ENCODE measurements at regions of chrX and their contacts with region 1.

Region 1: GRCh38 chrX:154397819-154398724 is at the start of gene RPL10:
- DNase-seq: peak; percentile 93
- H3K4me3 Mint-ChIP-seq: peak within 1 kb of the TSS; percentile 98
- H3K27ac Mint-ChIP-seq: peak within 1 kb of the TSS; percentile 100
- H3K4me1 Mint-ChIP-seq: peaks cover 16% of the 10 kb centered on the region
- H3K27me3 Mint-ChIP-seq: no peaks in the 10 kb centered on the region
- total RNA-seq, gene RPL10: 2,958 to 2,962 TPM

Region 2: DNA sequence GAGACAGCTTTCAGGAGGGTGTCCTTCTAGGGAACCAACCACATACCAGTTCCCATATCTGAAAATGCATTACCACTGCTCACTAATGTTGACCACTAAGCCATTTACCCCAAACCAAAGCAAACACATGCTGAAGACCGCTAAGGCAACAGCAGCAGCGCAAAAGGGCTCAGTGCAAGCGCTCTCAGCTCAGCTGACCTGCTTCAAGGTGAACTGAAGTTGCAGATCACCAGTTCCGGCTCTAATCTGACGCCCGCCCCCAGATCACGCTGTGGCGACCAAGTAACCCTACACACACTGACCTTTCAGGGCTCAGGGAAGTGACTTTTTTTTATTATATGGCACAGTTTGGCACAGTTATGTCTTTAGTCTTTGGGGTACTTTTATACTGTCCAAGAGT is 306.4 kb before region 1 on chrX:
- CTCF ChIA-PET with region 1: no interaction called
- POLR2A ChIA-PET with region 1: no interaction called
- DNase-seq: no peak
- H3K4me3 Mint-ChIP-seq: no peak overlapping the region
- H3K27ac Mint-ChIP-seq: peak overlapping the region; percentile 6
- H3K4me1 Mint-ChIP-seq: peaks cover 63% of the 10 kb centered on the region
- H3K27me3 Mint-ChIP-seq: no peaks in the 10 kb centered on the region

Region 3: DNA sequence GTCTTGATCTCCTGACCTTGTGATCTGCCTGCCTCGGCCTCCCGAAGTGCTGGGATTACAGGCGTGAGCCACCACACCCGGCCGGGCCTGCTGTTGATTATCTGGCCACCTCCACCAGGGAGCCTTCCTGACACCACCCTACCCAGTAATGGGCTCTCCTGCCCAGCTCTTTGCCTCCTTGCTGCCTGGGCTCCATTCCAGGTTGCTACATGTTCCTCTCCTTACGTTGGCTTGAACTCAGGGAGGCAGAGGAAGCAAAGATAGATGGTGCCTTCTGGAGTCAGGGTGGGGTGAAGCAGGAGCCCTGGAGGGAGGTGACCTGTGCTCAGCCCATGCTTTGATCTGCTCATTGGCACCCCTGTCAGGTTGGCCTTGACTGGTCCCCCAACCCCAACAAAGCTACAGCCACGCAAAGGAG is 49.9 kb before region 1 on chrX:
- CTCF ChIA-PET with region 1: no interaction called
- POLR2A ChIA-PET with region 1: interaction called, 14 read pairs
- DNase-seq: no peak
- H3K4me3 Mint-ChIP-seq: peak overlapping the region; percentile 30
- H3K27ac Mint-ChIP-seq: peak overlapping the region; percentile 81
- H3K4me1 Mint-ChIP-seq: peaks cover 54% of the 10 kb centered on the region
- H3K27me3 Mint-ChIP-seq: no peaks in the 10 kb centered on the region

Region 4: DNA sequence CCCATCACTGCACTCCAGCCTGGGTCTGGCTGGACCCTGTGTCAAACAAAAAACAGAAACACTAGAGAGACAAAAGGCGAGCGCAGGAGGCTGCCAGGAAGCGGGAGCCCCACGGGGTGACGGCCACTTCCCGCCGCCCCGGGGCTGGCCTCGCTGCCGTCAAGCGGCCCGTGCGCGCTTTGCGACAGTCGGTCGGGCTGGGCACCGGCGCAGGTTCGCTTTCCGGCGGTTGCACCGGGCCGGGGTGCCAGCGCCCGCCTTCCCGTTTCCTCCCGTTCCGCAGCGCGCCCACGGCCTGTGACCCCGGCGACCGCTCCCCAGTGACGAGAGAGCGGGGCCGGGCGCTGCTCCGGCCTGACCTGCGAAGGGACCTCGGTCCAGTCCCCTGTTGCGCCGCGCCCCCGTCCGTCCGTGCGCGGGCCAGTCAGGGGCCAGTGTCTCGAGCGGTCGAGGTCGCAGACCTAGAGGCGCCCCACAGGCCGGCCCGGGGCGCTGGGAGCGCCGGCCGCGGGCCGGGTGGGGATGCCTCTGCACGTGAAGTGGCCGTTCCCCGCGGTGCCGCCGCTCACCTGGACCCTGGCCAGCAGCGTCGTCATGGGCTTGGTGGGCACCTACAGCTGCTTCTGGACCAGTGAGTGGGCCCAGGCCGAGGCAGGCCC is 13.4 kb after region 1 on chrX and contains the start of gene TAFAZZIN:
- CTCF ChIA-PET with region 1: interaction called, 6 read pairs
- POLR2A ChIA-PET with region 1: interaction called, 103 read pairs
- DNase-seq: peak; percentile 83
- H3K4me3 Mint-ChIP-seq: peak within 1 kb of the TSS; percentile 93
- H3K27ac Mint-ChIP-seq: peak within 1 kb of the TSS; percentile 92
- H3K4me1 Mint-ChIP-seq: peaks cover 18% of the 10 kb centered on the region
- H3K27me3 Mint-ChIP-seq: no peaks in the 10 kb centered on the region
- total RNA-seq, gene TAFAZZIN: 93.7 to 93.9 TPM

Region 5: DNA sequence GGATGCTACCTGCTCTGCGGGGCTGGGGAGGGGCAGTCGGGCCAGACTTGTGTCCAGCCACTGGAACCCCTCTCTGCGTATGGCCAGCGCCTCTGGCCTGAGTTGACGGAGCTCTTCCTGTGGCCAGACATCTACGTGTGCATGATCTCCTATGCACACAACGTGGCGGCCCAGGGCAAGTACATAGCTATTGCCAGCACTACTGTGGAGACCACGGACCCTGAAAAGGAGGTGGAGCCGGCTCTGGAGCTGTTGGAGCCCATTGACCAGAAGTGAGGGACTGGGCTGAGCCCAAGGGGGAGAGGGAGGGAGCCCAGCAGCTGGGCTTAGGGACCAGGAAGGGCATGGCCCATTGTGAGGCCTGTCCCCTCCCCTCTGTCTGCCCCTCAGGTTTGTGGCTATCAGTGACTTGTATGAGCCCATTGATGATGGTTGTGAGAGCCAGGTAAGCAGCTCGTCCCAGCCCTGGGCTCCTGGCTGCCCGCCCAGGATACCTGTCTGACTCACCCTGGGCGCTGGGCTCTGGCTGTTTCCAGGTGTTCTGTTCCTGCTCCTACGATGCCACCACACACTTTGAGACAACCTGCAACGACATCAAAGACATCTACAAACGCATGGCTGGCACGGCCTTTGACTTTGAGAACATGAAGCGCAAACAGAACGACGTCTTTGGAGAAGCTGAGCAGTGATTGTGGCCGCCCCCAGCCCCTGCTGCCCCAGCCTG is 44.1 kb after region 1 on chrX:
- CTCF ChIA-PET with region 1: interaction called, 3 read pairs
- POLR2A ChIA-PET with region 1: interaction called, 11 read pairs
- DNase-seq: no peak
- H3K4me3 Mint-ChIP-seq: no peak overlapping the region
- H3K27ac Mint-ChIP-seq: peak overlapping the region; percentile 72
- H3K4me1 Mint-ChIP-seq: peaks cover 42% of the 10 kb centered on the region
- H3K27me3 Mint-ChIP-seq: no peaks in the 10 kb centered on the region

Region 6: DNA sequence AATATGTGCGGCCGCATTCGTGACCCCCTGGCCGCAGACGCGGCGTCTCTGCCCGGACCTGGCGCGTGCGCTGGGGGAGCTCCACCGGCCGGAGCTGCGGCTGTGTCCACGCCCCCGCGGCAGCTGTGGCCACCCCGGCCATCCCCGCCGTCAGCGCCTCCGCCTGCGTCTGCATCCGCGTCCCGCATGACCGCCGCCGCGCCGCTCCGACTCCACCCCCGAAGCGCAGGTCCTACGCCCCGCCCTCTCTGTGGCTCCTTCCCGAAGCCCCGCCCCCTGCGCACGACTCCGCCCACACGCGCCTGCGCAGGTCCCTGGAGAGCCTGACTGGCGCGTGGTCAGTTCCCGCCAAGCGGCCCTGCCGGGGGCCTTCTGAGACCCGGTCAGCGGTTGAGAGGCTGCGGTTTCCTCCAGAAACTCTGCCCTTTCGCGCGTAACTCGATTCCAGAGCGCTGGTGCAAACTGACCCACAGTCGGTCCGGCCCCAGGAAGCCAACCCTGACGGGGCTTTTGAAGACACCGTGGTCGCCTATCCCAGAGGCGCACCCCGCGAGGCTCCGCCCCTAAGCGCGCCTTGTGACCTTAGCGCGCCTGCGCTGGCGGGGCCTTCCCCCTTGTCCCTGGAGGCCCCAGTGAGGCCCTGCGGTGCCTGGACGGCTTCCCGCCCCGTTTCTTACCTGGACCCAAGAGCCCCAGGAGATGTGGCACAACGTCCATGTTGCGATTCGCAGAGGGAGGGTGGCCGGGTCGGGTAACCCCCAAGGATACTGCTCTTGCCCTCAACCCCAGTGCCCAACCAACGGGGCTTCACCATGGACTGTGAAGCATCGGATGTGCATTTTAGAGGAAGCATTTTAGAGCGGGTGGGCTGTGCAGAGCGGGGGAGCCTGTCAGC is 80.9 kb after region 1 on chrX and contains the start of gene LAGE3:
- CTCF ChIA-PET with region 1: interaction called, 3 read pairs
- POLR2A ChIA-PET with region 1: interaction called, 12 read pairs
- DNase-seq: peak; percentile 95
- H3K4me3 Mint-ChIP-seq: peak within 1 kb of the TSS; percentile 76
- H3K27ac Mint-ChIP-seq: peak within 1 kb of the TSS; percentile 79
- H3K4me1 Mint-ChIP-seq: peaks cover 30% of the 10 kb centered on the region
- H3K27me3 Mint-ChIP-seq: no peaks in the 10 kb centered on the region
- total RNA-seq, gene LAGE3: 28.1 to 29.9 TPM

Region 7: DNA sequence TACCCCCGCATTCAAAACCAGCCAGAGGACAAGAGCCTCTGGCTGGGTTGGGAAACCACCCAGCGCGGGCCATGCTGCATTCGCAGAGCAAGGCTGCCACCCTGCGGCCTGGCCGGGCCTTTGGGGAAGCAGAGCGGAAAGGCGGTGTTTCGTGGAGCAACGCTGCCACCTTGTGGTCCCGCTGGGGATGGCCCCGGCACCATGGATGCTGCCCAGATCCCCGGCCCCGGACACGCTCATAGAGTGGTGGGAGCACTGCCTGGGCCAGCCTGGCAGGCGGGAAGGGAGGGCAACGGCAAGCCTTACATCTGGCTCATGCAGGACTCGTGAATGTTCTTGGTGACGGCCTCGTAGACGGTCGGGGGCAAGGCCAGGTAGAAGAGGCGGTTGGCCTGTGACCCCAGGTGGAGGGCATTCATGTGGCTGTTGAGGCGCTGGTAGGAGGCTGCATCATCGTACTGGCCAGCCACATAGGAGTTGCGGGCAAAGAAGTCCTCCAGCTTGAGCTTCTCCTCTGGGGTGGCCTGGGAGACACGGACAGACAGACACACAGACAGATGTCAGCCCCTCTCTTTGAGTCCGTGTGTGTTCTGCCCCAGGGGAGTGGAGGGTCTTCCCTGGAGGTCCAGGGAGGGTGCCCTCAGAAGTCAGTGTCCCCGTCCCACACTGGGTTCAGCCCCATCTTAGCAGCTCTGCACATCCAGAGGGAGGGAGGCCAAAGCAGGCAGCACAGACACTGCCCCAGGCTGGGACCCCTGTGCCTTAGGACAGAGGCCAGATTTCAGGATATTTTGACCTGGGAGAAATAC is 137.0 kb after region 1 on chrX:
- CTCF ChIA-PET with region 1: interaction called, 4 read pairs
- POLR2A ChIA-PET with region 1: interaction called, 10 read pairs
- DNase-seq: peak; percentile 87
- H3K4me3 Mint-ChIP-seq: no peak overlapping the region
- H3K27ac Mint-ChIP-seq: peak overlapping the region; percentile 44
- H3K4me1 Mint-ChIP-seq: peaks cover 15% of the 10 kb centered on the region
- H3K27me3 Mint-ChIP-seq: no peaks in the 10 kb centered on the region